T-cell (primary cell): ENCODE measurements at regions of chr4 and their contacts with region 1.

Region 1: DNA sequence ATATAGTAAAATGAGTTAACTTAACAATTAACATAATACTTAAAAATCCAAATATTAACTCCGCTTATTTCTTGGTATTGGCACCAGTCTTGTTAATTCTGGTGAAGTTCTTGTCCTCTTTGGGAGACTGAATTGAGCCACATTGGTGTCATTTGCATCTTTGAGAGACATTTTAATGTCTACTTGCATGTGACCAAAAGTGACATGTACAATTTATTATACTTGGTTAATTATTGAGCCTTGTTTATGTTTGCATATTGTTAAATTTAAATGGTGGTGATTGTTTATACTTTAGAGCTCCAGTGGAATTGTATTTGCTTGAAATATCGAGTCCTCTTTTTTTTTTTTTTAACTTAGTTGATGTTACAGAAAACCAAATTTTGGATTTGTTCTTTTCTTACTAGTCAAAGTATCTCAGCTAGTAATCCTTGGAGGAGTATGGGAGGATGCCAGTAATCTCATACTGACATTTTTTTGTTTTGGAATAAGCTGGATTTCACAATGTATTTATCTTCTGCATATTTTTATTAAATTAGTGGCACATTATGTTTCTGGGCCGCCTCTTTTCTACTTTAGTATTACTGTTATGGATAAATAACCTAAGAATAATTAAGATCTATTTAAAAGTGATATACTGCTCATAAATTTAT is 3.9 kb downstream of the SPCS3 start:
- DNase-seq: no peak
- ATAC-seq: no peak
- H3K4me3 ChIP-seq: no peak overlapping the region
- H3K4me3 Mint-ChIP-seq: peak overlapping the region; percentile 13 to 88 (median 34)
- H3K27ac ChIP-seq: no peak overlapping the region
- H3K27ac Mint-ChIP-seq: peak overlapping the region; percentile 43 to 44
- H3K4me1 ChIP-seq: peaks cover 6 to 40% of the 10 kb centered on the region in 2 experiments
- H3K4me1 Mint-ChIP-seq: peaks cover 57 to 72% (median 69%) of the 10 kb centered on the region in 3 donors
- H3K27me3 ChIP-seq: no peaks in the 10 kb centered on the region
- H3K27me3 Mint-ChIP-seq: no peaks in the 10 kb centered on the region

Region 2: DNA sequence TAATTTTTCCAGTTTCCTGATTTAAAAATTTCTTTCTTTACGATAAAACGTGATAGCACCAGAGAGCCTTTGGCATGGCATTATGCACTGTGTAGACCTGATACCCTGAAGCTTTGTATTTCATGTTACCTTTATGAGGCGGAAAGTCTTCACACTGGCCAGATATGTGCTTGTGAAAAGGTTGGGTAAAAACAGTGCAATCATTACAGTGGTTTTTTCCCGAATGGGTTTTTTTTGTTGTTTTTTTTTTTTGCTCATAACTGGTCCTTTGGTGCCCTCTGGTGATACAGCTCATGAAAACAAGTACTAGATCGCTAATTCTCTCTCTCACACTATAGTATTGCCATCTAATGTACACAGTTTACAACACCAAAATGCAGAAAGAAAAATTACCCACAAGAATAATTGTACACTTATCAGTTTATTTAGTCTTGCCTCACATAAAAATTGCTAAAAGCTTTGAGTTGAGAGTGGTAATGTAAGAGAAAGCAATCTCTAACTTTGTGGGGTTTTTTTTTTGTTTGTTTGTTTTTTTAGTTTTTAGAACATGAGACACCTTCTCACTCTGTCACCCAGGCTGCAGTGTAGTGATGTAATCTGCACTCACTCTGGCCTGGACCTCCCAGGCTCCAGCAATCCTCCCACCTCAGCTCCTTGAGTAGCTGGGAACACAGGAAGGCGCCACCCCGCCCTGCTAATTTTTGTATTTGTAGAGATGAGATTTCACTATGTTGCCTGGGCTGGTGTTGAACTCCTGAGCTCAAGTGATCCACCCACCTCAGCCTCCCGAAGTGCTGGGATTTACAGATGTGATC is 17.4 kb after region 1 on chr4:
- CTCF ChIA-PET with region 1: interaction called, 8 to 18 read pairs
- POLR2A ChIA-PET with region 1: interaction called in 1 of 2 experiments, 6 read pairs
- DNase-seq: peak in 4 of 35 experiments; percentile 14 to 69 (median 28)
- ATAC-seq: peak in 2 of 4 experiments; percentile 27 to 49
- H3K4me3 ChIP-seq: no peak overlapping the region
- H3K4me3 Mint-ChIP-seq: no peak overlapping the region
- H3K27ac ChIP-seq: no peak overlapping the region
- H3K27ac Mint-ChIP-seq: no peak overlapping the region
- H3K4me1 ChIP-seq: no peaks in the 10 kb centered on the region
- H3K4me1 Mint-ChIP-seq: peaks cover 0 to 18% (median 11%) of the 10 kb centered on the region in 3 donors
- H3K27me3 ChIP-seq: peaks cover 0 to 9% of the 10 kb centered on the region in 2 experiments
- H3K27me3 Mint-ChIP-seq: no peaks in the 10 kb centered on the region